ENCODE measurements at regions of chr14 and their contacts with region 1.

Region 1: DNA sequence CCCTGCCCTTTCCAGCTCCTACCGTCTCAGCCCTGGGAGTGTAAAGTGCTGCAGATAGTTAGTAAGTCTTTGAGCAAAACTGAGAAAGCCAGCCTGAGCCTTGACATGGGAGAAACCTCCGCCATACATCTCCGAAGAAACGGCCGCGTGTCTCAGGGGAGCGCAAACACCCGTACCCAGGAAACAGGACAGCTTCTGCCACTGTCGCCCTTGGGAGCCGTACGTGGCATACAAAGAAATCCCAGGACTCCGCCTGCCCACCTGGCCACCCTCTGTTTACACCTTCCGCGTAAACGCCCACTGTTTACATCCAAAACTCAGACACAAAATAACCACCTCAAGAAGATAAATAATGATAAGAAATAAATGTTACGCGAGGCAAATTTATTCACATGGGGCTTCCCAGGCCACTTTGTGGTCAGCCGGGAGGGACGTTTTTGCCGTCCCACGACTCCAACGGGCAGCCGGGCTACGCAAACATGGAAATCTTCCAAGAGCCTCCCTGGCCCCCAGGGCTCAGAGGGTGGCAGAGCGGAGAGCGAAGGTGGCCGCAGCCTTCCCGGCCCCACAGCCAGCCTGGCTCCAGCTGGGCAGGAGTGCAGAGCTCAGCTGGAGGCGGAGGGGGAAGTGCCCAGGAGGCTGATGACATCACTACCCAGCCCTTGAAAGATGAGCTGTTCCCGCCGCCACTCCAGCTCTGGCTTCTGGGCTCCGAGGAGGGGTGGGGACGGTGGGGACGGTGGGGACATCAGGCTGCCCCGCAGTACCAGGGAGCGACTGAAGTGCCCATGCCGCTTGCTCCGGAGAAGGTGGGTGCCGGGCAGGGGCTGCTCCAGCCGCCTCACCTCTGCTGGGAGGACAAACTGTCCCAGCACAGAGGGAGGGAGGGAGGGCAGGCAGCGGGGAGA is at the start of gene BDKRB2:
- DNase-seq: peak; percentile 33
- H3K4me3 ChIP-seq: no peak within 1 kb of the TSS
- H3K27ac ChIP-seq: no peak within 1 kb of the TSS
- H3K4me1 ChIP-seq: no peaks in the 10 kb centered on the region
- H3K27me3 ChIP-seq: no peaks in the 10 kb centered on the region
- CTCF ChIP-seq: no peak
- POLR2A ChIP-seq: no peak
- total RNA-seq, gene BDKRB2: 0.39 and 0.77 TPM in 2 replicates

Region 2: DNA sequence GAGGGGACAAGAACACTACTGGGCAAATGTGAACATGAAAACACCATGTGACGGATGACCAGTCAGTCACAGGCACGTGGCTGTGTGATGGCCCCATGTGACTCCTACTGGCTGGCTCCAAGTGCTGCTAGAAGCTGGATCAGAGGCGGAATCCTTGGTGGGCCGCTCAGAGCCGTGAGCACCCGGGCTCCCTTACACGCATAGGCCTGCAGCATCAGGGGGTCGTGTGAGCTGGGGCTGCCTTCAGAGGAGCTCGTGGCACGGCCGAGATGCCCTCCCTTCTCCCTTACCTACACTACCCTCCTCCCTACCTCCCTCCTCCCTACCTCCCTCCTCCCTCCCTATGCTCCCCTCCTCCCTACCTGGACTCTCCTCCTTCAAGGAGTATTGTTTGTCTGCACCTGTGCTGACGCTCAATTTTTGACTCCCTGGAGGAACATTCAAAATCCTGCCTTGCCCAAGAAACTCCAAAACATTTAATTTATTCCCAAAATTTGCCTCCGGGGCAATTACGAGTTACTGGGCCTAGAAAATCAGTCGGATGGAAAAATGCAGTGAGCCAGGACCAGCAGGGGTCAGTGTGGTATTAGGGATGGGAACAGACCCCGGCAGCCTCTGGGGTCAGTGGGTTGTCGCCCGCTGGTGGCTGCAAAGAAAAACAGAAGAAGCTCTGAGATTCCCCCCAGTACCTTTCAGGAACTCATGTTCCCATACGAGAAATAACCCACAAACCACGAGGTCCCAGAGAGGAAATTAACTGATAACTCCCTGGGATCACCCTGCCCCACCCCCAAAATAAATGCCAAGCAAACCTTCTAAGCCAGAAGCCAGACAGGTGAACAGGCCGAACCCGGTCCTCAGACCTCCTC is 104.0 kb before region 1 on chr14:
- CTCF ChIA-PET with region 1: no interaction called
- POLR2A ChIA-PET with region 1: no interaction called
- dilution Hi-C with region 1: no loop called
- intact Hi-C with region 1: loop called (anchors 2 kb)
- DNase-seq: peak; percentile 64
- H3K4me3 ChIP-seq: no peak overlapping the region
- H3K27ac ChIP-seq: no peak overlapping the region
- H3K4me1 ChIP-seq: no peaks in the 10 kb centered on the region
- H3K27me3 ChIP-seq: no peaks in the 10 kb centered on the region
- CTCF ChIP-seq: peak; percentile 81 to 83
- POLR2A ChIP-seq: no peak

Region 3: DNA sequence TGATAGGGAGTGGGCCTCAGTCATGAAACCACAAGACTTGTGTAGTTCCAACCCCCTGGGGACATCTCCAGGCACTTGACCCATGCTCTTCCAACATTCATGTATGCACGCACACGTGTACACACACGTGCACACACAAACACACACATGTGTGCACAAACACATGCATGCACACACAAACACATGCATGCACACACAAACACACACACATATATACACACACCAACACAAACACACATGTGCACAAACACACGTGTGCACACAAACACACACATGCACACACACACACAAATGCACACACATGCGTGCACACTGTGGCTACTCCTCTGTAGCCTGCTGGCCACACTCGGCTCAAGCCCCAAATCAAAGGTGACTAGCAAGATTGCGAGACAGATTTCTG is 23.0 kb after region 1 on chr14:
- CTCF ChIA-PET with region 1: no interaction called
- POLR2A ChIA-PET with region 1: no interaction called
- dilution Hi-C with region 1: no loop called
- intact Hi-C with region 1: loop called (anchors 1 kb)
- DNase-seq: no peak
- H3K4me3 ChIP-seq: no peak overlapping the region
- H3K27ac ChIP-seq: no peak overlapping the region
- H3K4me1 ChIP-seq: no peaks in the 10 kb centered on the region
- H3K27me3 ChIP-seq: no peaks in the 10 kb centered on the region
- CTCF ChIP-seq: no peak
- POLR2A ChIP-seq: no peak

Measured in endothelial cell of umbilical vein (primary cell).